Activated T-helper 1 cell treated with anti-CD3 and anti-CD28 coated beads, Interleukin-12 subunit alpha, Interleukin-12 subunit beta, Interleukin-2, Interleukin-4 antibody, amounts not matched to agents 30 ng/mL and 10 ng/mL and 1 ng/mL, durations not matched to agents 14 hours and 24 hours and 36 hours (primary cell): ENCODE measurements at regions of chr15 and their contacts with region 1.

Region 1: DNA sequence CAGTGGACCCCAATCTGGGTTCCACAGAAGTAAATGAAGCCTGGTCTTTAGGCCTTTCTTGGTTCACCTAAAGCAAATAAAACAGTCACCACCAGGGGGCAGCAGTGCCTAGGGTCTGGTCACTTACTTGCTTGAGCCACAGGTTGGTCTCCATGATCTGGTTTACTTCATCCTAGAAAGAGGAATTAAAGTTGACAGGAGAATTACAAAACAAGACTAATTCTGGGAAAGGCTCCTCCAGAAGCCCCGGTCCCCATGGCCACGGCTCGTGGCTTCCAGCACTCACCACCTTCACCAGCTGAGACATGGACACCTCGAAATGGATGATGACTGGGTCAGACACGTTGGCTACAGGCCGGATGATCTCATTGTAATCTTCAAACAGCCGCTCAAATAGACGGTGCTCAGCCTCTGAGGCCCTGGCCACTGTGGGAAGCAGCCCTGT is 2.3 kb downstream of the CHRNA3 start:
- DNase-seq: peak; percentile 63
- H3K4me3 Mint-ChIP-seq: no peak overlapping the region
- H3K27ac Mint-ChIP-seq: peak overlapping the region; percentile 61
- H3K4me1 Mint-ChIP-seq: no peaks in the 10 kb centered on the region
- H3K27me3 Mint-ChIP-seq: peaks cover 50% of the 10 kb centered on the region

Region 2: GRCh38 chr15:78751602-78751979 is 133.1 kb after region 1 on chr15:
- intact Hi-C with region 1: loop called (anchors 1 kb)
- DNase-seq: no peak
- H3K4me3 Mint-ChIP-seq: no peak overlapping the region
- H3K27ac Mint-ChIP-seq: no peak overlapping the region
- H3K4me1 Mint-ChIP-seq: no peaks in the 10 kb centered on the region
- H3K27me3 Mint-ChIP-seq: peaks cover 3% of the 10 kb centered on the region